ENCODE measurements at regions of chr3 and their contacts with region 1.

Region 1: GRCh38 chr3:189961525-189962161 is 159.1 kb downstream of the P3H2 start:
- DNase-seq: peak; percentile 71 to 77
- H3K4me3 ChIP-seq: no peak overlapping the region
- H3K27ac ChIP-seq: peak overlapping the region in 1 of 2 donors; percentile 71
- H3K4me1 ChIP-seq: no peaks in the 10 kb centered on the region
- H3K27me3 ChIP-seq: no peaks in the 10 kb centered on the region
- CTCF ChIP-seq: peak; percentile 93 to 97 (median 95)
- POLR2A ChIP-seq: no peak

Region 2: GRCh38 chr3:190204200-190204599 is 242.6 kb after region 1 on chr3:
- intact Hi-C with region 1: loop called (anchors 5 kb)
- DNase-seq: no peak
- H3K4me3 ChIP-seq: no peak overlapping the region
- H3K27ac ChIP-seq: no peak overlapping the region
- H3K4me1 ChIP-seq: no peaks in the 10 kb centered on the region
- H3K27me3 ChIP-seq: no peaks in the 10 kb centered on the region
- CTCF ChIP-seq: no peak
- POLR2A ChIP-seq: no peak

Region 3: DNA sequence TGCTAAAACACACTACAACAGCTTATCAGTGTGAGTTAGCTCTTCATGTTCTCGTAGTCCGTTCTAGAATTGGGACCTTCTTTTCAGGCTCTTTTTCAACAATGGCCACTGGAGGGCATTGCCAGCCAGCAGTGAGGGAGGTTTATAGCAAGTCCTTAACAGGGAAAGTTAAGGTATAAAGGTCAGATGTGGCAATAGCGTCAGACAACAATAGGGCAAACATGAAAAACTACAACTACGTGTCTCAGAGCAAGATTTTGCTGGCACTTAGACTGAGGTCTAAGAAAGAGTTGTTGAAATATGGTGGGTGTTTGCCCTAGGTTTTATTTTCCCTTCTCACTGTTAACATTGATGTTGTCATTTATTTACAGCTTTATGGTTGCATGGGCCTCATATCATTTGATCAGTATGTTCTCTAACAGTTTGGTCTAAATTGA is 739.5 kb after region 1 on chr3:
- intact Hi-C with region 1: loop called (anchors 5 kb)
- DNase-seq: peak in 1 of 2 donors; percentile 38
- H3K4me3 ChIP-seq: no peak overlapping the region
- H3K27ac ChIP-seq: no peak overlapping the region
- H3K4me1 ChIP-seq: no peaks in the 10 kb centered on the region
- H3K27me3 ChIP-seq: no peaks in the 10 kb centered on the region
- CTCF ChIP-seq: peak in 2 of 3 donors; percentile 22 to 57
- POLR2A ChIP-seq: no peak